ENCODE measurements at regions of chr2 and their contacts with region 1.

Region 1: GRCh38 chr2:159807183-159808031 is 9.4 kb upstream of the CD302 start:
- DNase-seq: peak; percentile 74
- H3K4me3 Mint-ChIP-seq: no peak overlapping the region
- H3K27ac Mint-ChIP-seq: no peak overlapping the region
- H3K4me1 Mint-ChIP-seq: no peaks in the 10 kb centered on the region
- H3K27me3 Mint-ChIP-seq: peaks cover 24% of the 10 kb centered on the region
- CTCF ChIP-seq: peak; percentile 64

Region 2: DNA sequence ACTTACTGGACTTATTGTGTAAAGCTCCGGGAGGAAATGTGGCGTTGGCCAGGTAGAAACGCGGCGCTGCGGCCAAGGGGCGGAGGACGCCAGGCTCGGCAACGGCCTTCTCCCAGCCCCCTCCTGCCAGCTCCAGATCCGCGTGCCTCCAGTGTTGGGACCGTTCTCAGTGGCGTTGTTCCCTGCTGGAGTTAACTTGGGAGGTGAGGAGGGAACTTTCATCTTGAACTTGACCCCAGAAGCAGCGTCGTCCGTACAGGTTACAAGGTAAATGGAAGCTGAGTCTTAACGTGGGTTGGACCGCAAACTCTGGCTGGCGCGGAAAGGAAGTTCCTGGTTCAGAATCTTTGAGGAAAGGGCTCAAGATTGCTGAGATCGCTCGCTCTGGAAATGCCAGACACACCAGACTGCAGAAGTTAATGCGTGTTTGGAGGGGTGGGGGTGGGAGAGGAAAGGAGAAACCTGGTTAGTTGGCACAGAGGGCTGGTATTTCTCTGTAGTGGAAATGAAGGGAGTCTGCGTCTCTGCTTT is 837.6 kb before region 1 on chr2:
- CTCF ChIA-PET with region 1: no interaction called
- POLR2A ChIA-PET with region 1: no interaction called
- intact Hi-C with region 1: no loop called
- DNase-seq: peak; percentile 48
- H3K4me3 Mint-ChIP-seq: peak overlapping the region; percentile 90
- H3K27ac Mint-ChIP-seq: peak overlapping the region; percentile 90
- H3K4me1 Mint-ChIP-seq: peaks cover 41% of the 10 kb centered on the region
- H3K27me3 Mint-ChIP-seq: no peaks in the 10 kb centered on the region
- CTCF ChIP-seq: no peak

Region 3: DNA sequence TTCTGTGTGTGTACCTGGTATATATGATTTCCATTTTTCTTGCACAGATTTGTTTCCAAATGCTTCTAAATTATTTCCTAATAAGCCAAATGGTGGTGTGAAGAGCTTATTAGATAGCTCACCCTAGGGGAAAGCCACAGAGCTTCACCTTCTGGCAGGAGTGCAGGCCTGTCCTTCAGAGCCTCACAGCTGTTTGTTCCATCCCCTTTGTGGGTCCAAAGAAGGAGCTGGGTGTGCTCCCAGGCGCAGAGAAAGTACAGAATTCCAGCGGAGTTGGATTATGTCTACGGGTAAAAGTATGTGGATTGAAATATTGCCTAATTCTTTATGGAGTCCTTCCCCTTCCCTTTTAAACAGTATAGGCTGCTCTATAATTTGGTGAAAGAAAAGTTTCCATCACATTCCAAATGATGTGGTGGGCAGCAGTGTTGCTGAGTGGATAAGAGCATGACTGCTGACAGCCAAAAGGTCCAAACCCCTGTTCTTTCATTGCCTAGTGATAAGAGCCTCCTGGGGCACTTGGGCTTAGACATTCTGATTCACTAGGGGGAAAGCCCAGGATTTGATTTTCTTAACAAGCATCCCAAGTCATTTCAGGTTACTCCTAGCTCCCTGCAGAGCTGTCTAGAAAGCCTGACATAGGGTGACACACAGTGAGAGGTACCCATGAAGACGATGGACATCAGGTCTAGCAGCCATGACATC is 607.5 kb before region 1 on chr2:
- CTCF ChIA-PET with region 1: no interaction called
- POLR2A ChIA-PET with region 1: no interaction called
- intact Hi-C with region 1: loop called (anchors 5 kb)
- DNase-seq: no peak
- H3K4me3 Mint-ChIP-seq: no peak overlapping the region
- H3K27ac Mint-ChIP-seq: no peak overlapping the region
- H3K4me1 Mint-ChIP-seq: no peaks in the 10 kb centered on the region
- H3K27me3 Mint-ChIP-seq: no peaks in the 10 kb centered on the region
- CTCF ChIP-seq: no peak

Region 4: GRCh38 chr2:159265171-159265576 is 542.2 kb before region 1 on chr2:
- CTCF ChIA-PET with region 1: no interaction called
- POLR2A ChIA-PET with region 1: no interaction called
- intact Hi-C with region 1: no loop called
- DNase-seq: peak; percentile 21
- H3K4me3 Mint-ChIP-seq: no peak overlapping the region
- H3K27ac Mint-ChIP-seq: no peak overlapping the region
- H3K4me1 Mint-ChIP-seq: peaks cover 11% of the 10 kb centered on the region
- H3K27me3 Mint-ChIP-seq: no peaks in the 10 kb centered on the region
- CTCF ChIP-seq: no peak

Region 5: DNA sequence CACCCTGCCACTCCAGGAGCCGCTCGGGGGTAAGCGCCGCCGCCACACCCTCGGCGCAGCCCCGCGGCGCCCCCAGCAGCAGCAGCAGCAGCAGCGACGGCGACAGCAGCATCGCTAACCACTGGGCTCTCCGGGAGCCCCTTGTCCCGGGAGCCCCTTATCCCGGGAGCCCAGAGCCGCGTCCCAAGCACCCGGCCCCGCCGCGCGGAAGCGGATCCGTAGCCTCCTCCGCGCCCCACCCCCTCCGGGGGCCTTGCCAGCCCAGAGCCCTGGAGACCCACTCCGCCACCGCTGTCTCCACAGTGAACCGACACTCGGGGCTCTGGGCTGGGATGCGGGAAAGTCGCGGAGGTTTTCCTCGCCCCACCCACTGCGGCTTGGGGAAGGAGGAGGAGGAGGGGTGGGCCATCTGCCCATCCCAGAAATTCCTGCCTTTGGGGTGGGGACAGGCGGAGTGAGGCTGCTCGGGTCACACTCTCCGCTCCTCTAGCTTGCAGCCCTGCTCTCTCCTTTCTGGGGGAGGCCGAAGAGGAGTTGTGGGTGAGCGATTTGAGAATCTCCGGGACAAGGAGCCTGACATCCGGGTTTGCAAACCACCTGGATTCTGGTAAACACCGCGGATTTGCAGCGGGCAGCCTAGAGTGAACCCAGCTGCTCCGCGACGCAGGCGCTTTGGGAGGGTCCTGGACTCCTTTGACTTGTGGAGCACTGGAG is 255.0 kb after region 1 on chr2 and contains the start of gene PLA2R1:
- CTCF ChIA-PET with region 1: no interaction called
- POLR2A ChIA-PET with region 1: no interaction called
- intact Hi-C with region 1: no loop called
- DNase-seq: peak; percentile 58
- H3K4me3 Mint-ChIP-seq: peak within 1 kb of the TSS; percentile 82
- H3K27ac Mint-ChIP-seq: peak within 1 kb of the TSS; percentile 78
- H3K4me1 Mint-ChIP-seq: peaks cover 22% of the 10 kb centered on the region
- H3K27me3 Mint-ChIP-seq: no peaks in the 10 kb centered on the region
- CTCF ChIP-seq: no peak
- total RNA-seq, gene PLA2R1: 7.5 and 8.4 TPM in 2 replicates